ENCODE measurements at regions of chr1 and their contacts with region 1.

Region 1: DNA sequence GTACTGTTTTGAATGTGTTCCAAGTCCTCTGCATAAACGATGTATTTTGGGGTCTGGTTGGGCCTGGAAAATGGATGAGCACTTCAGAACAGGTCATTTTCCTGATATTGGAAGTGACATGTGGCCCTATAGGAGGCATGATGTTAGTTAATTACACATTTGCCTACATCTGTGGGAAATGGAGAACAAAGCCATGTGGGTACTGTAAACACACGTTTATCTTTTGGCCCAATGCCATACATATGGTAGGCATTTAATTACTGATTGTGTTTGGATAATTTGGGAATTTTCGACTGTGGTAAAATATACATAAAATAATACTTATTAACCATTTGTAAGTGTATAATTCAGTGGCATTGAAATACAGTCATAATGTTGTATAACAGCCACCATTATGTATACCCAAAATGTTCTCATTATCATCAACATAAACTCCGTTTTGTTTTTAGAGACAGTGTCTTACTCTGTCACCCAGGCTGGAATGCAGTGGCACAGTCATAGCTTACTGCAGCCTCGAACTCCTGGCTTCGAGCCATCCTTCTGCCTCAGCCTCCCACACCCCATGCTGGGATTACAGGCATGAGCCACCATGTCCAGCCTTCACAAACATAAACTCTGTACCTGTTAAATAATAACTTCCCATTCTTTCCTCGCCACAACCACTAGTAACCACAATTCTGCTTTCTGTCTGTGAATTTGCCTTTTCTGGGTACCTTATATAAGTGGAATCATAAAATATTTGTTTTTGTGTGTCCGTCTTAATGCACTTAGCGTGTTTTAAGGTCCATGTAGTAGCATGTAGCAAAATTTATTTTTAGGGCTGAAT is 11.9 kb upstream of the RNPEP start:
- DNase-seq: no peak
- ATAC-seq: no peak
- H3K4me3 ChIP-seq: no peak overlapping the region
- H3K4me3 Mint-ChIP-seq: no peak overlapping the region
- H3K27ac ChIP-seq: no peak overlapping the region
- H3K27ac Mint-ChIP-seq: no peak overlapping the region
- H3K4me1 ChIP-seq: no peaks in the 10 kb centered on the region
- H3K4me1 Mint-ChIP-seq: no peaks in the 10 kb centered on the region
- H3K27me3 ChIP-seq: peaks cover 0 to 2% (median 0%) of the 10 kb centered on the region in 4 experiments
- H3K27me3 Mint-ChIP-seq: no peaks in the 10 kb centered on the region
- CTCF ChIP-seq: no peak

Region 2: GRCh38 chr1:201559679-201560162 is 410.8 kb before region 1 on chr1:
- CTCF ChIA-PET with region 1: interaction called, 13 read pairs
- POLR2A ChIA-PET with region 1: no interaction called
- intact Hi-C with region 1: no loop called
- DNase-seq: peak; percentile 73
- ATAC-seq: peak; percentile 89
- H3K4me3 ChIP-seq: no peak overlapping the region
- H3K4me3 Mint-ChIP-seq: no peak overlapping the region
- H3K27ac ChIP-seq: no peak overlapping the region
- H3K27ac Mint-ChIP-seq: no peak overlapping the region
- H3K4me1 ChIP-seq: peaks cover 0 to 4% of the 10 kb centered on the region in 2 donors
- H3K4me1 Mint-ChIP-seq: peaks cover 2% of the 10 kb centered on the region
- H3K27me3 ChIP-seq: no peaks in the 10 kb centered on the region
- H3K27me3 Mint-ChIP-seq: peaks cover 7% of the 10 kb centered on the region
- CTCF ChIP-seq: peak; percentile 95

Region 3: GRCh38 chr1:201709564-201710295 is 260.8 kb before region 1 on chr1:
- CTCF ChIA-PET with region 1: interaction called, 23 read pairs
- POLR2A ChIA-PET with region 1: no interaction called
- intact Hi-C with region 1: loop called (anchors 2 kb)
- DNase-seq: peak; percentile 68
- ATAC-seq: peak; percentile 87
- H3K4me3 ChIP-seq: no peak overlapping the region
- H3K4me3 Mint-ChIP-seq: no peak overlapping the region
- H3K27ac ChIP-seq: no peak overlapping the region
- H3K27ac Mint-ChIP-seq: no peak overlapping the region
- H3K4me1 ChIP-seq: no peaks in the 10 kb centered on the region
- H3K4me1 Mint-ChIP-seq: no peaks in the 10 kb centered on the region
- H3K27me3 ChIP-seq: peaks cover 0 to under 1% (median 0%) of the 10 kb centered on the region in 4 experiments
- H3K27me3 Mint-ChIP-seq: peaks cover 4% of the 10 kb centered on the region
- CTCF ChIP-seq: peak; percentile 87

Region 4: DNA sequence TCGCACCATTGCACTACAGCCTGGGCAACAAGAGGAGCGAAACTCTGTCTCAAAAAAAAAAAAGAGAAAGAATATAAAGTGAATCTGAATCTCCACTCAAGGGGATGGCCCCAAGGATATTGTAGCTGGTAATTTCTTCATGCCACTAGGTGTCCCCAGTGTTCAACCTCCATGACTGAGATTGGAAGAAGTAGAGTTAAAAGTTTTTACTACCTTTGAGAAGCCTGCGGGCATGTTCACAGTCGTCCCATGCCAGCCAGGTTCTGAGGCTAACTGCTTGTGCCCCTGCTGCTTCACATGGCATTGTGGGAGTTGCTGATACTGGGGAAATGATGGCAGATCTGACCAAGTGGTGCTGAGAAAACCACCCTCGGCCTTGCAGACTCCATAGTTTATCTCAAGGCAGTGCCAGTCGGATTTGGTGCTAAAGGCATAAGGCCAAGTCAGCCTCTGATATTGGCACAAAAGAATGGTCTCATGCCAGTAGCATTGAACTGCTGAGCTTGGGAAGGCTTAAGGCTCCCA is 92.6 kb before region 1 on chr1:
- CTCF ChIA-PET with region 1: interaction called, 13 read pairs
- POLR2A ChIA-PET with region 1: no interaction called
- intact Hi-C with region 1: loop called (anchors 1 kb)
- DNase-seq: peak; percentile 41
- ATAC-seq: no peak
- H3K4me3 ChIP-seq: no peak overlapping the region
- H3K4me3 Mint-ChIP-seq: no peak overlapping the region
- H3K27ac ChIP-seq: no peak overlapping the region
- H3K27ac Mint-ChIP-seq: no peak overlapping the region
- H3K4me1 ChIP-seq: peaks cover 6 to 7% of the 10 kb centered on the region in 2 donors
- H3K4me1 Mint-ChIP-seq: peaks cover 12% of the 10 kb centered on the region
- H3K27me3 ChIP-seq: no peaks in the 10 kb centered on the region
- H3K27me3 Mint-ChIP-seq: no peaks in the 10 kb centered on the region
- CTCF ChIP-seq: peak; percentile 58

Region 5: DNA sequence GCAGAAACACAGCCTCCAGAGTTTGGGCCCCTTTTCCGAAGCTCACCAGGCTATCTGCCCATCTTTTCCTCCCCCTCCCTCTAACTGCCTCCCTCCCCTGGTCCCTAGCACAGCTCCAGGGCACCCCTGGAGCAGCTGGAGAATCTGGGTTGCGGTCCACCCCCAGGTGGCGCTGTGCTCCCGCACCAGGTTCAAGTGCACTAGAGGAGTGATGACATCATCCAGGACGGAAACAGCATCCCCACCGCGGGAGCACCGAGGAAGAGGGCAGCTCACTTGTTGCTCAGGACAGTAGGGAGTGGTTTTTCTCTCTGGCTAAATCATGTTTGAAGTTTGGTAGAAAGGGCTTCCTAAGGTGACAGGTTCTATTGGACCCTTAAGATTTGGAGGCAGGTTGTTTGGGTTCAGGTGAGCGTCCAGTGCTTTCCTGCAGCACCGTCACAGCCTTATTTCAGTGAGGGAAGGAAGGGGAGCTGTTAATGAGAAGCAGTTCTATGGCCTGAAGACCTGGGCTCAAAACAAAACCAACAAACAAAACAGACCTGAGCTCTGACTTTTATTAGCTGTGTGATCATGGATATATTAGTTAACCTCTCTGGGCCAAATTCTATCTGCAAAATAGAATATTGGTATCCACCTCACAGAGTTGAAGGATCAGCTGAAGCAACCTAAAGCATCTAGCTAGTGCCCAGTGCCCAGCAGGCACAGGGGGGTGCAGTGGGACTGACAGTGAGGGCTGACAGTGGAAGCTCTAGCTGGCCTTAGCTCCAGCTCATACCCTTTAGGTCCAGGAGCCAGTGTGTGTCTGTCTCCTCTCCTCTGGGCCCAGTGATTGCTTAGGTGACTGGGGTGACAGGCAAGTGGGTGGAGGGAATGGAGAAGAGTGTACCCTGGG is 74.4 kb before region 1 on chr1:
- CTCF ChIA-PET with region 1: interaction called, 51 read pairs
- POLR2A ChIA-PET with region 1: no interaction called
- intact Hi-C with region 1: no loop called
- DNase-seq: peak; percentile 72
- ATAC-seq: peak; percentile 64
- H3K4me3 ChIP-seq: no peak overlapping the region
- H3K4me3 Mint-ChIP-seq: peak overlapping the region; percentile 37
- H3K27ac ChIP-seq: no peak overlapping the region
- H3K27ac Mint-ChIP-seq: no peak overlapping the region
- H3K4me1 ChIP-seq: peaks cover 0 to 4% of the 10 kb centered on the region in 2 donors
- H3K4me1 Mint-ChIP-seq: peaks cover 5% of the 10 kb centered on the region
- H3K27me3 ChIP-seq: peaks cover 0 to 20% (median 2%) of the 10 kb centered on the region in 4 experiments
- H3K27me3 Mint-ChIP-seq: peaks cover 37% of the 10 kb centered on the region
- CTCF ChIP-seq: peak; percentile 76